ENCODE measurements at regions of chr4 and their contacts with region 1.

Region 1: DNA sequence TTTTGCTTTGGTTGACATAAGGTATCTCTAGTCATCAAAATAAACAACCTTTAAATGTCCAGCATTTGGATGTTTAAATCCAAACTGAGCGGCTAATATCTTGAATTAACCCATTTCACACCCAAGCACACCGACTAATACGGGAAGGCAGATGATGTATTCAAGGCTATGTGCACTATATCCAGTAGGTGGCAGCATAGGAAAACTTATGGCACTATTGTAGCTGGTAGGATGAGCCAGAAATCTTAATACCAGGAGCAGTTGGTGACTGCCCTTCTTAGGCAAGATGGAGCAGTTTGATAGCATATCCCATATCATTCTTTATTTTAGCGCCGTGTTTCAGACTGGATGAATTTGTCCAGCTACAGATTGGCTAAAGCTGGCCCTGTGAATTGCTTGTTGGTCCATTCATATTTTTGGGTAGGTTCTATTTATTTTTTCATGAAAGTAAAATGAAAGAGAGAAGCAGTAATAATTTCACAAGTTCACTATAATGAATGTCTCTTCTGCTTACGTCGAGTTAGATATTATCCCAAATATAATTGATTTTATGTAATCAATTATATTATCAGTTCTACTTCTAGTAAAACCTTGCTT is 24.4 kb downstream of the UCHL1 start:
- DNase-seq: peak in 1 of 3 donors; percentile 50
- ATAC-seq: peak; percentile 99 to 100 (median 100)
- H3K4me3 ChIP-seq: no peak overlapping the region
- H3K27ac ChIP-seq: no peak overlapping the region
- H3K4me1 ChIP-seq: no peaks in the 10 kb centered on the region
- H3K27me3 ChIP-seq: no peaks in the 10 kb centered on the region
- CTCF ChIP-seq: peak; percentile 83 to 97 (median 87)
- POLR2A ChIP-seq: no peak

Region 2: GRCh38 chr4:41644288-41644914 is 363.3 kb after region 1 on chr4:
- intact Hi-C with region 1: loop called in 1 of 2 experiments (anchors 10 kb)
- DNase-seq: peak; percentile 73 to 80 (median 73)
- ATAC-seq: peak; percentile 87 to 97 (median 94)
- H3K4me3 ChIP-seq: peak overlapping the region in 1 of 3 donors; percentile 9
- H3K27ac ChIP-seq: no peak overlapping the region
- H3K4me1 ChIP-seq: peaks cover 0 to 12% (median 0%) of the 10 kb centered on the region in 4 donors
- H3K27me3 ChIP-seq: no peaks in the 10 kb centered on the region
- CTCF ChIP-seq: peak; percentile 73 to 96 (median 94)
- POLR2A ChIP-seq: no peak

Region 3: GRCh38 chr4:41661442-41662076 is 380.4 kb after region 1 on chr4:
- intact Hi-C with region 1: loop called in 1 of 2 experiments (anchors 5 kb)
- DNase-seq: peak in 2 of 3 donors; percentile 40 to 57
- ATAC-seq: peak; percentile 90 to 95 (median 92)
- H3K4me3 ChIP-seq: no peak overlapping the region
- H3K27ac ChIP-seq: no peak overlapping the region
- H3K4me1 ChIP-seq: no peaks in the 10 kb centered on the region
- H3K27me3 ChIP-seq: no peaks in the 10 kb centered on the region
- CTCF ChIP-seq: peak; percentile 85 to 98 (median 95)
- POLR2A ChIP-seq: no peak

Region 4: GRCh38 chr4:42252315-42252714 is 971.2 kb after region 1 on chr4:
- intact Hi-C with region 1: no loop called
- DNase-seq: no peak
- ATAC-seq: no peak
- H3K4me3 ChIP-seq: no peak overlapping the region
- H3K27ac ChIP-seq: no peak overlapping the region
- H3K4me1 ChIP-seq: no peaks in the 10 kb centered on the region
- H3K27me3 ChIP-seq: no peaks in the 10 kb centered on the region
- CTCF ChIP-seq: no peak
- POLR2A ChIP-seq: no peak

Measured in right lobe of liver (tissue), 6 donors.